Heart left ventricle (tissue), 16 donors: ENCODE measurements at regions of chr11 and their contacts with region 1.

Region 1: DNA sequence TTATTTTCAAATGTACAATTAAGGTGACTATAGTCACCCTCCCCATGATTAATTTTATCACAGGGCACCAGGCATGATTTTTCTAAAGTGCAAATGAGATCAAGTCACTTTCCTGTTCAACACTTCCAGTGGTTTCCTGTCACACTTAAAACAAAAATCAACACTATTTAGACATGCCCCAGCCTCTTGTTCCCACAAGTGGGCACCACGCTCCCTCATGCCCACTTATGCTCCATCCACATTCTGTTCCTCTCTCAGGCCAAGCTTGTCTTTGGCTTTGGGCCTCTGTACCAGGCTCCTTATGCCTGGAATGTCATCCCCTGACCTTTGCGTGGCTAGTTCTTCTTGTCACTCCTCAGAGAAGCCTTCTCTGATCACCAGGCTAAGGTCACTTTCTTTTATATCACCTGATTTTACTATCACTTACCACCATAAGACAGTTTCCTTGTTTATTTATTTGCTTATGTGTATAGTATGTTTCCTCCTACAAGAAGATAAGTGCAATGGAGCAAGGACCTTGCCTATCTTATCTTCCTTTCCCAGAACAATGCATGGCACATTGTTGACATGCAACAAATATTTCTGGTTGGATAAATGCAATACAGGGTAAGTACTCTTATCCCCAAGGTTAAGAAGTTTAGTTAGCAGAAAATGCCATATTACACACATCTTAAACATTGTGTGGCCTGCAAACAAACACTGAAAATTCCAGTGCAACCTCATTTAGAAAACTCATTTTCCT is 50.9 kb upstream of the PANX1 start:
- DNase-seq: no peak
- ATAC-seq: peak in 2 of 4 donors; percentile 76
- H3K4me3 ChIP-seq: no peak overlapping the region
- H3K27ac ChIP-seq: no peak overlapping the region
- H3K4me1 ChIP-seq: peaks cover 0 to 5% (median 0%) of the 10 kb centered on the region in 12 donors
- H3K27me3 ChIP-seq: no peaks in the 10 kb centered on the region
- CTCF ChIP-seq: peak in 5 of 12 donors; percentile 10 to 30 (median 21)
- POLR2A ChIP-seq: no peak

Region 2: DNA sequence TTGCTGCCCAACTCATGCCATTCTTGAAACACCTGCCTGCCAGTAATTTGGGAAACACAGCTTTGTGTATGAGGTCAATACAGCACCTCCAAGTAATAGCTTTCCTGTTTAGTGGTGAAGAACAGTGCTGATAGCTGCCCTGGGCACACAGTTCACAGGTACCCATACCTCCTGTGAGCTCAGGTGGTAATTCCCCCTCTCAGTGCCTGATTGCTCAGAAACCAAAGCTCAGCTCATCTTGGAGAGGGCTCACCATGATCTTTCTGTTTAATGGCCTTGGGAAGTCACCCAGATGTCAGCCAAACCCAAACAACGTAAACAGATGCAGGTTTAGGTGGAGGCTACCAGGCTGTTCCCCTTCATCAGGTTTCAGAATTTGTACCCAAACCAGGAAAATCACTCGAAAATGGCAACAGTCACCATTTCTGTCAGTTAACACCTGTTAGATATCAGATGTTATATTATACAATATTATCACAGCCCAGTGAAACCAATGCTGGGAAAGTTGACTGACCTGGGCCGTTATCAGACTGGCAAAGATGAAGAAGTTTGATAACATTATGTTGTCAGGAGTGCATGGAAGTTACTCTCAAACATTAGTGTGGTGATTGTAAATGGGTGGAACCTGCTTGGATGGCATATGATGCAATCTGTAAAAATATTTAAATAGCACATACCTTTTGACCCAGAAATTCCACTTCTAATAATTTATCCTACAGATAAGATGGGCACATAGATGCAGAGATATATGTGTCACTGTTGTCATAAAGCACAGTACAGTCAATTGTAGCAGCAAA is 246.2 kb before region 1 on chr11:
- intact Hi-C with region 1: no loop called
- DNase-seq: no peak
- ATAC-seq: no peak
- H3K4me3 ChIP-seq: no peak overlapping the region
- H3K27ac ChIP-seq: no peak overlapping the region
- H3K4me1 ChIP-seq: no peaks in the 10 kb centered on the region
- H3K27me3 ChIP-seq: no peaks in the 10 kb centered on the region
- CTCF ChIP-seq: no peak
- POLR2A ChIP-seq: no peak

Region 3: GRCh38 chr11:94060405-94060804 is 17.3 kb before region 1 on chr11:
- intact Hi-C with region 1: loop called in 1 of 10 experiments (anchors 2 kb)
- DNase-seq: no peak
- ATAC-seq: no peak
- H3K4me3 ChIP-seq: no peak overlapping the region
- H3K27ac ChIP-seq: no peak overlapping the region
- H3K4me1 ChIP-seq: no peaks in the 10 kb centered on the region
- H3K27me3 ChIP-seq: no peaks in the 10 kb centered on the region
- CTCF ChIP-seq: no peak
- POLR2A ChIP-seq: no peak